ENCODE measurements at regions of chr2 and their contacts with region 1.

Region 1: GRCh38 chr2:8408560-8409460 is 273.0 kb upstream of the ID2 start:
- DNase-seq: peak; percentile 43
- H3K4me3 Mint-ChIP-seq: no peak overlapping the region
- H3K27ac Mint-ChIP-seq: peak overlapping the region; percentile 79
- H3K4me1 Mint-ChIP-seq: peaks cover 36% of the 10 kb centered on the region
- H3K27me3 Mint-ChIP-seq: peaks cover 24% of the 10 kb centered on the region

Region 2: GRCh38 chr2:7845332-7845731 is 563.5 kb before region 1 on chr2:
- intact Hi-C with region 1: loop called (anchors 1 kb)
- DNase-seq: no peak
- H3K4me3 Mint-ChIP-seq: no peak overlapping the region
- H3K27ac Mint-ChIP-seq: peak overlapping the region; percentile 81
- H3K4me1 Mint-ChIP-seq: peaks cover 64% of the 10 kb centered on the region
- H3K27me3 Mint-ChIP-seq: no peaks in the 10 kb centered on the region

Region 3: DNA sequence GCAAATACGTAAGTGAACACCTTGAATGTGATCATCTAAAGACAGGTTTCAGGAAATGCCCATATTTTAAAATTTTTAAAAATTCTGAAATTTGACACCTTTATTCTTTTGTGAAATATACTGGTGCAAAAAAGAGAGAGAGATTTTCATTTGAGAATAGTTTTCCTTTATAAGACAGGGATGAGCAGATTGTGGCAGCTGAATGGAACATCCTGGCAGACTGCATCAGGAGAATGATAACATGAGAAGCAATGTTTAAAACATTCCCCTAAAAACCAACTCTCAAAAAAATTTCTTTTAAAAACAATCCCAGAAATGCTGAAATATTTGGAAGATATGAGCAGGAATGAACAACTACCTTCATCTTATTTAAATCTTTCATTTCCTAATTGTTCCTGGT is 471.7 kb before region 1 on chr2:
- intact Hi-C with region 1: no loop called
- DNase-seq: no peak
- H3K4me3 Mint-ChIP-seq: no peak overlapping the region
- H3K27ac Mint-ChIP-seq: no peak overlapping the region
- H3K4me1 Mint-ChIP-seq: peaks cover 45% of the 10 kb centered on the region
- H3K27me3 Mint-ChIP-seq: no peaks in the 10 kb centered on the region

Region 4: DNA sequence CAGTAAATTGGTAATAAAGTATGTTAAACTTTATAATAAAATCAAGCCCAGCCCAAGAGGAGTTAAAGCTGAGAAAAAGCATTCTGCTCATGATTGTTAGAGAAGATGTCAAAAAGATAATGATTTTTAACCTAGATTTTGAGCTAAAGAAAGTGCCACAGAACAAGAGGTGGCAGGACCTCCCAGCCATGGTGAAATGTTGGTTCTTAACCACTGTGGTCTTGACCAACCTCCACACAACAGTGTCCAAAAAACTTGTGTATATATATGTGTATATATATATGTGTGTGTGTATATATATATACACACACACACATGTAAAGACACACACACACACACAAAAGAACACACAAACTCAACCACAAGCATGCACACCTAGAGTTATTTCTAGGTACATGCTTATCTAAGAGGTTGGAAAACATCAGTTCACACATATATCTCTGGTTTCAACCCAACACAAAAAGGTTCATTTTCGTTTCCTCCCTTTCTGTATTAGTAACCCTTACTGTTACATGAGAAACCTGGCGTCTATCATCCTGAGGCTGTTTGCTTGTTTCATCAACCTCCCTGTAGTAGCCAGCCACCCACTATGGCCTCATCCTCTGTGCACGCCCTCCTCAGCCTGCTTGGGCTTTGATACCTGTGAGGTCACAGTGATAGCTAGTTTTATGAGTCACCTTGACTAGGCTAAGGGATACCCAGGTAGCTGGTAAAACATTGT is 358.8 kb before region 1 on chr2:
- intact Hi-C with region 1: loop called (anchors 5 kb)
- DNase-seq: peak; percentile 63
- H3K4me3 Mint-ChIP-seq: peak overlapping the region; percentile 30
- H3K27ac Mint-ChIP-seq: peak overlapping the region; percentile 86
- H3K4me1 Mint-ChIP-seq: peaks cover 53% of the 10 kb centered on the region
- H3K27me3 Mint-ChIP-seq: no peaks in the 10 kb centered on the region

Region 5: GRCh38 chr2:8303322-8303832 is 105.4 kb before region 1 on chr2:
- intact Hi-C with region 1: loop called (anchors 1 kb)
- DNase-seq: peak; percentile 82
- H3K4me3 Mint-ChIP-seq: peak overlapping the region; percentile 49
- H3K27ac Mint-ChIP-seq: peak overlapping the region; percentile 47
- H3K4me1 Mint-ChIP-seq: peaks cover 81% of the 10 kb centered on the region
- H3K27me3 Mint-ChIP-seq: no peaks in the 10 kb centered on the region

Region 6: DNA sequence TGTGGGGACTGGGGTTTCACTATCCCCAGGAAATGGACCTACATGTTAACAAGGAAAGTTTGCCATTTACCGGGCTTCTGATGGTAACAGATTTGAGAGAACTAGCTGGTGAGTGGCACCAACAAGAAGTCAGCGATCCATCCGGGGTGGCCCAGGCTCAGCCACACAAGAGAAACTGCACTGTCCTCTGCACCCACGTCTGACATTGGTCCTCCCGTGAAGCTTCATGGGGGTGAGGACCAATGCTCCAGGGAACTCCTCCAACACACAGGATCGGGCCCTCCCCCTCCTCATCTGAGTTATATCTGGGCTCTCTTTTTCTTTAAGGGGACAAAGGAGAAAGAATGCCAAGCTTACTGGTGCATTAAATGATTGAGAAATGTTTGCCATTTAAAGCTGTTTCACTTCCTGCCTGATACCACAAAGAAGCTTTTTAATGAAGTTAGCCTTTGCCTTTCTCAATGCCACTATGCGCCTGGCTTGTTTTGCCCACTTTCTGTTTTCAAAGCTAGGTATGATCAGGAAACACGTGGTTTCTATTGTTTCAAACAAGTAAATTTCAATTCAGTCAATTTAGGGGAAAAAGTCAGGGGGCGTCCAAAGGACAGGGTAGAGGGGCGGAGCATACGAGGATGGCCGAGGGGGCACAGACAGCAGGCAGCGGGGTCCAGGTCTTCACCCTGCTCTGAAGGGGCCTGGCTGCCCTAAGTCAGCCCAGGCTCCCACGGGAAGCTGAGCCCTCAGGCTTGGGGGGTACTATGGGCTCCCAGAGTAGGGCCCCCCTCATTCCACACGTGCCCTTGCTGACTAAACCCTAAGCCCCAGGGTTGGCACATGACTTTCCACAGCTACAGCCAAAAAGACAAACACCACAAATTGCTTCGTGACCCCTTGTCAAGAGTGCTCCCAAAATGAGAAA is 69.0 kb after region 1 on chr2:
- intact Hi-C with region 1: loop called (anchors 2 kb)
- DNase-seq: no peak
- H3K4me3 Mint-ChIP-seq: peak overlapping the region; percentile 5
- H3K27ac Mint-ChIP-seq: peak overlapping the region; percentile 72
- H3K4me1 Mint-ChIP-seq: peaks cover 79% of the 10 kb centered on the region
- H3K27me3 Mint-ChIP-seq: no peaks in the 10 kb centered on the region

Region 7: DNA sequence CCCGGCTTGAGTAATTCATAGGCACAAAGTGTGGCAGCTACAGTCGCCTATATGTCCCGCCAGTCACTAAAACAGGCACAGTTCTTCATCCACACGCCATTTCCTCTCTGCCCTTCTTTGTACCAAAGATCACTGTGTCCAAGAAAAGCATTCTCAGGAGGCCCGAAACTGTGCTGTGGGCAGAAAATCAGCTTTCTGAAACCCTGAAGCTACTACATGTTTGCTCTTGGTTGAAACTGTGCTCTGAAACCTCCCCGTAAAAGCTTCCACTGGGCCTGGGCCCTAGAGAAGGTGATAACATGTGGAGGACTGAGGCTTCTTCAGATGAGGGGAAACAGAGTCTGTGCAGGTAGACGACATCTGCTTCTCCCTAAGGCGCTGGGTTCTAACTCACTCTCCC is 197.4 kb after region 1 on chr2:
- intact Hi-C with region 1: loop called (anchors 1 kb)
- DNase-seq: no peak
- H3K4me3 Mint-ChIP-seq: no peak overlapping the region
- H3K27ac Mint-ChIP-seq: peak overlapping the region; percentile 53
- H3K4me1 Mint-ChIP-seq: peaks cover 55% of the 10 kb centered on the region
- H3K27me3 Mint-ChIP-seq: peaks cover 7% of the 10 kb centered on the region

Measured in activated T-helper 2 cell treated with anti-CD3 and anti-CD28 coated beads, Interferon-gamma antibody, Interleukin-2, Interleukin-4, amounts not matched to agents 10 μg/mL and 5 μg/mL and 100 μg/mL, durations not matched to agents 14 hours and 24 hours and 36 hours (primary cell).